ENCODE measurements at regions of chr3 and their contacts with region 1.

Region 1: DNA sequence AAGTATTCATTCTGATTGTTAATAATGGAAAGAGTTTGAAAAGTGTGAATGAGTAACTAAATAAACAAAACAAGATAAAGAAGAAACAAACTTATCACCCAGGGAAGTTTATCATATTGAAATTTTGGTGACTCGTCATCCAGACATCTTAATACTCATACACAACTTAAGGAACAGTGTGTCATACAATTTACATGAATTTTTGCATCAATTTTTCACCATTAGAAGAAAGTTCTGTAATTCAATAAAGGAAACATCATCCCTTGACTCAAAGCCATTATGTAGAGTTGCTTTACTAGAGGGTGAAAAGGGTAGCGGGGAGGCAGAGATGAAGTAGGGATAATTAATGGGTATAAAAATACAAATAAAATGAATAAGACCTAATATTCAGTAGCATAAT is 536.2 kb downstream of the GRM7 start:
- DNase-seq: no peak
- H3K4me3 ChIP-seq: no peak overlapping the region
- H3K4me3 Mint-ChIP-seq: no peak overlapping the region
- H3K27ac Mint-ChIP-seq: no peak overlapping the region
- H3K4me1 ChIP-seq: no peaks in the 10 kb centered on the region
- H3K4me1 Mint-ChIP-seq: no peaks in the 10 kb centered on the region
- H3K27me3 ChIP-seq: no peaks in the 10 kb centered on the region
- H3K27me3 Mint-ChIP-seq: no peaks in the 10 kb centered on the region
- CTCF ChIP-seq: no peak

Region 2: DNA sequence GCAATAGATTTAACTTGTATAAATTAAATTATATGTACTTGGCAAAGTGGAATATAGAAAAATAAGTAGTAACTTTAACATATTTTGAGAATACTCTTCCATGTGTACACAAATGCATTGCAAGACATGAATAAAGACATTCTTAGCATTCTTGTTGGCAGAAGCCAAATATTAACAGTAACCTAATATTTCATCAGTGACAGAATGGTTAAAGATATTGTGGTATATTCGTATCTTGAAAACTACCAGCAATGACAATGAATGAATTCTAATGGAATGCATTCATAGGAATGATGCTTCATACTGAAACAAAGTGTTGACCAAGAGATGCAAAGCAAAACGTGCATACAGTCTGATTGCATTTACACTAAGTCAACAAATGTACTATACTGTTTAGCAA is 11.5 kb before region 1 on chr3:
- CTCF ChIA-PET with region 1: no interaction called
- POLR2A ChIA-PET with region 1: interaction called, 11 read pairs
- intact Hi-C with region 1: no loop called
- DNase-seq: no peak
- H3K4me3 ChIP-seq: no peak overlapping the region
- H3K4me3 Mint-ChIP-seq: no peak overlapping the region
- H3K27ac Mint-ChIP-seq: no peak overlapping the region
- H3K4me1 ChIP-seq: no peaks in the 10 kb centered on the region
- H3K4me1 Mint-ChIP-seq: no peaks in the 10 kb centered on the region
- H3K27me3 ChIP-seq: no peaks in the 10 kb centered on the region
- H3K27me3 Mint-ChIP-seq: no peaks in the 10 kb centered on the region
- CTCF ChIP-seq: no peak